ENCODE measurements at regions of chr13 and their contacts with region 1.

Region 1: DNA sequence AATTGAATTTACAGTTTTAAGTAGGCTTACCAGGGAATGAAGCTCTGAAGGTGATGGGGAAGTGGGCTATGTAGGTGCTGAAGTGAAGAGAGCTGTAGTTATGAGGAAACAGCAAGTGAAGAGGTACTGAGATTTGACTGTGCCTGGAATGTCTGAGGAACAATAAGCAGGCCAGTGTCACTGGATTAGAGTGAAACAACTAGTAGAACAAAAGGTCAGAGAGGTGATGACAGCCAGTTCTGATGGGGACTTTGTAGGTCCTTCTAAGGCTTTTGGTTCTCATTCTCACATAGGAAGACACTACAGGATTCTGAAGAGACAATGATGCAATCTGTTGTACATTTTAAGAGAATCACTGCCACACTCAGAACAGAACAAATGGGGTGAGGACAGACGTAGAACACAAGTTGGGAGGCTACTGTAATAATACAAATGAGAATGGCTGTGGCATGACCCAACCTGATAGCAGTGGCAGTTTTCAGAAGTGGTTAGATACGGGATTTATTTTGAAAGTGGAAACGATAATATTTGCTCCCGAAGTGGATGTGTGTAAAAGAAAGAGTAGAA is 130.8 kb downstream of the MYCBP2 start:
- DNase-seq: no peak
- ATAC-seq: no peak
- H3K4me3 ChIP-seq: no peak overlapping the region
- H3K4me3 Mint-ChIP-seq: no peak overlapping the region
- H3K27ac ChIP-seq: no peak overlapping the region
- H3K27ac Mint-ChIP-seq: no peak overlapping the region
- H3K4me1 ChIP-seq: no peaks in the 10 kb centered on the region
- H3K4me1 Mint-ChIP-seq: peaks cover 0 to 5% (median 0%) of the 10 kb centered on the region in 7 donors
- H3K27me3 ChIP-seq: no peaks in the 10 kb centered on the region
- H3K27me3 Mint-ChIP-seq: no peaks in the 10 kb centered on the region

Region 2: DNA sequence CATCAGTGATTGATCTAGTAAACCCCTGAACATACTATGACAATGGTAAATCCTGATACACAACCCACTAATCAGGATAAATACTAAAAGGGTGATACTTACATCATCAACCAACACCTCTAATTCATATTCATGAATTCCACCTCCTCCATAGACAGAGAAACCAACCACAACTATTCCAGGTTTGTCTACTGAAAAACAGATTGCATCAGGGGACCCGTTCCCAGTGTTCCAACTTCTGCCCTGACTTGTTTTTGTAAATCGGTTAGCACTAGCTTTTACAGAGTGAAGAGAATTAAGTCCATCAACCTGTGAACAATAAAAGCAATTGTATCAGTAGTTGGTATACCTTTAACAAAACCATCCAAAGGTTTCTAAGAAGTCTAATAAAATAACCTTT is 18.5 kb before region 1 on chr13:
- CTCF ChIA-PET with region 1: no interaction called
- POLR2A ChIA-PET with region 1: interaction called, 3 read pairs
- intact Hi-C with region 1: loop called in 1 of 2 experiments (anchors 2 kb)
- DNase-seq: no peak
- ATAC-seq: no peak
- H3K4me3 ChIP-seq: no peak overlapping the region
- H3K4me3 Mint-ChIP-seq: no peak overlapping the region
- H3K27ac ChIP-seq: no peak overlapping the region
- H3K27ac Mint-ChIP-seq: no peak overlapping the region
- H3K4me1 ChIP-seq: no peaks in the 10 kb centered on the region
- H3K4me1 Mint-ChIP-seq: peaks cover 0 to 7% (median 0%) of the 10 kb centered on the region in 7 donors
- H3K27me3 ChIP-seq: no peaks in the 10 kb centered on the region
- H3K27me3 Mint-ChIP-seq: no peaks in the 10 kb centered on the region

Region 3: GRCh38 chr13:77184455-77184854 is 11.7 kb before region 1 on chr13:
- CTCF ChIA-PET with region 1: no interaction called
- POLR2A ChIA-PET with region 1: interaction called, 3 read pairs
- intact Hi-C with region 1: loop called in 1 of 2 experiments (anchors 1 kb)
- DNase-seq: peak in 1 of 9 donors; percentile 30
- ATAC-seq: peak; percentile 61
- H3K4me3 ChIP-seq: no peak overlapping the region
- H3K4me3 Mint-ChIP-seq: peak overlapping the region in 2 of 10 donors; percentile 8 to 16
- H3K27ac ChIP-seq: no peak overlapping the region
- H3K27ac Mint-ChIP-seq: peak overlapping the region in 8 of 9 donors; percentile 17 to 86 (median 68)
- H3K4me1 ChIP-seq: no peaks in the 10 kb centered on the region
- H3K4me1 Mint-ChIP-seq: peaks cover 10 to 29% (median 22%) of the 10 kb centered on the region in 7 donors
- H3K27me3 ChIP-seq: no peaks in the 10 kb centered on the region
- H3K27me3 Mint-ChIP-seq: no peaks in the 10 kb centered on the region

Measured in naive thymus-derived CD4-positive, alpha-beta T cell (primary cell).